ENCODE measurements at regions of chr12 and their contacts with region 1.

Region 1: GRCh38 chr12:51970904-51971646 is 19.6 kb downstream of the ACVR1B start:
- DNase-seq: peak; percentile 70
- ATAC-seq: peak; percentile 85
- H3K4me3 Mint-ChIP-seq: peak overlapping the region; percentile 53
- H3K27ac Mint-ChIP-seq: peak overlapping the region; percentile 82
- H3K4me1 Mint-ChIP-seq: peaks cover 64% of the 10 kb centered on the region
- H3K27me3 Mint-ChIP-seq: no peaks in the 10 kb centered on the region

Region 2: DNA sequence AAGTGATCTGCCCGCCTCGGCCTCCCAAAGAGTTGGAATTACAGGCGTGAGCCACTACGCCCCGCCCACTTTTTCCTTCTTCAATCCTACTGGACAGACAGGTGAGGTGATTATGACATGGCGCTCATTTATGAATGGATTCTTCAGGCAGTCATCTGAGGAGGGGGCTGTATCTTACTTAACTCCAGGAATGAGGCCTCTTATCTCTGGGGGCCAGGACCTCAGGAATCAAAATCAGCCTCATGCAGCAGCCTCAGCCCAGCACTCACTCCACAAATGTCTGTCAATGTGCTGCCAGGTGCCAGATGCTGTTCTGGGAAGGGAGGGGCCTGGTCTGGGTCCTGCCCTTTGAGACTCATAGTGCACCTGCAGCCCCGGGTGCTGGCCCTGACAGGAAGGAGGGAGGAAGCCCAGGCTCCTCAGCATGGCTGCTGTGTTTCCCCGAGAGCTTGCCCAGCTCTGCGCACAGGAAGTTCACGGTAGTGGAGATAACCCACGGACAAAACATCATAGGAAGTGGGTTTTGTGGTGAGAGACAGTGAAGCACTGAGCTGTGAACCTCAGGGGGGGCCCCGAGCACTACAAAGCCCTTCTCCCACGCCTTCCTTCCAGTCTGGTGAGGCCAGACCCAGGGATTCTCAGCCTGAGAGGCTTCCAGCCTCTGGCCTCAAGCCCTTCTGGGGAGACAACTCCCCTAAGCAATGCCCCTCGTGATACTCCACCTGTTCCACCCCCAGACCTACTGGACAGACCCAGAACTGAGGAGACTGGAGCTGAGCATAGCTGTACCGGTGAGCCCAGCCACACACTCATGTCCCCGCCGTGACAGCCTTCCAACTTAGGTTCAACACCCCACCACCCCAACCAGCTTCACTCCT is 602.2 kb before region 1 on chr12:
- CTCF ChIA-PET with region 1: interaction called, 3 read pairs
- POLR2A ChIA-PET with region 1: no interaction called
- intact Hi-C with region 1: loop called in 1 of 2 experiments (anchors 1 kb)
- DNase-seq: peak; percentile 94
- ATAC-seq: peak; percentile 97
- H3K4me3 Mint-ChIP-seq: peak overlapping the region; percentile 64
- H3K27ac Mint-ChIP-seq: peak overlapping the region; percentile 77
- H3K4me1 Mint-ChIP-seq: peaks cover 59% of the 10 kb centered on the region
- H3K27me3 Mint-ChIP-seq: no peaks in the 10 kb centered on the region

Region 3: GRCh38 chr12:51391283-51392162 is 579.6 kb before region 1 on chr12 and contains the start of gene GALNT6:
- CTCF ChIA-PET with region 1: no interaction called
- POLR2A ChIA-PET with region 1: no interaction called
- intact Hi-C with region 1: loop called in 1 of 2 experiments (anchors 10 kb)
- DNase-seq: peak; percentile 78
- ATAC-seq: peak; percentile 43
- H3K4me3 Mint-ChIP-seq: peak within 1 kb of the TSS; percentile 85
- H3K27ac Mint-ChIP-seq: peak within 1 kb of the TSS; percentile 67
- H3K4me1 Mint-ChIP-seq: peaks cover 79% of the 10 kb centered on the region
- H3K27me3 Mint-ChIP-seq: no peaks in the 10 kb centered on the region
- total RNA-seq, gene GALNT6: 11.7 to 12.0 TPM

Region 4: GRCh38 chr12:51886021-51886322 is 85.1 kb before region 1 on chr12:
- CTCF ChIA-PET with region 1: interaction called, 3 read pairs
- POLR2A ChIA-PET with region 1: no interaction called
- intact Hi-C with region 1: loop called in 1 of 2 experiments (anchors 2 kb)
- DNase-seq: peak; percentile 70
- ATAC-seq: peak; percentile 99
- H3K4me3 Mint-ChIP-seq: peak overlapping the region; percentile 12
- H3K27ac Mint-ChIP-seq: peak overlapping the region; percentile 87
- H3K4me1 Mint-ChIP-seq: peaks cover 19% of the 10 kb centered on the region
- H3K27me3 Mint-ChIP-seq: no peaks in the 10 kb centered on the region

Region 5: DNA sequence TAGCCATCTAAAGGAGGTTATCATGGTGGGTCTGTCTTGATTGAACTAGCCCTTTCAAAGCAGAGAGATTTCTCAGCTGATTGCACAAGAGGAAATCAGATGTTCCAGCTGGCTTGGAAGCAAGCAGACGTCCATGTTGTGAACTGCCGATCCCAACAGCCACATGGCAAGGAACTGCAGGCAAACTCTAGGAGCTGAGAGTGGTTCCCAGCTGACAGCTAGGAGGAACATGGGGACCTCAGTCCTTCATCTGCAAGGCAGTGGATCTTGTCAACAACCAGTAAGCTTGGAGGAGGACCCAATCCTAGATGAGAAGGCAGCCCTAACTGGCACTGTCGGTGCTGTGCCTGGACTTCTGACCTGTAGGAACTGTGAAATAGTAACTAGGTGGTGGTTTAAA is 11.9 kb before region 1 on chr12:
- CTCF ChIA-PET with region 1: interaction called, 32 read pairs
- POLR2A ChIA-PET with region 1: no interaction called
- intact Hi-C with region 1: loop called in 1 of 2 experiments (anchors 1 kb)
- DNase-seq: no peak
- ATAC-seq: no peak
- H3K4me3 Mint-ChIP-seq: no peak overlapping the region
- H3K27ac Mint-ChIP-seq: no peak overlapping the region
- H3K4me1 Mint-ChIP-seq: peaks cover 48% of the 10 kb centered on the region
- H3K27me3 Mint-ChIP-seq: no peaks in the 10 kb centered on the region

Region 6: DNA sequence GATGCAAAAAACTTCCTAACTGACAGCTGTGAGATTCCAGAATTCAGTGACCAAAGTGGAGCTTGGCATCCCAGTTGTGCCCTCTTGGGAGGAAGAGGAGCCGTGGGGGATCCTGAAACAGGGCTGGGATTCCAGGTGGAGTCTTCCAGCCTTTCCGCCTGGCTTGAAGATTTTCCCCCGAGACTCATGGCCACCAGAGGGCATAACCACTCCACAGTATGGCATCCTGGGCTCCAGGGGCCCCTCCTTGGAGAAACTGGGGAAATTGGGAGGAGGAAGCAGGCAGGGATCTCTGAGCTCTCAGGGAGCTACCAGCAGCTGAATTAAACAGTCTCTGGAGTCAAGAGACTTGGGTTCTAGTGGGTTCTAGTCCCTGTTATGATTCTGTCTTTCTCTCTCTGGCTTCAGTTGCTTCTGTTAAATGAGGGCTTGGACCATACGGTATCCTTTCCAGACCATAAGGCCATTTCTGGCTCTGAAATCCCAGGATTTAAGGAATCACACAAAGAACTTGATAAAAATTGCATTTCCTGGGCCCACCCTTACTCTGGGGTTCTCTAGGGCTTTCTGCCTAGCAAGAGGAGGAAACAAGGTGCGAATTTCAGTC is 33.1 kb after region 1 on chr12:
- CTCF ChIA-PET with region 1: interaction called, 13 read pairs
- POLR2A ChIA-PET with region 1: no interaction called
- intact Hi-C with region 1: loop called in 1 of 2 experiments (anchors 2 kb)
- DNase-seq: peak; percentile 43
- ATAC-seq: no peak
- H3K4me3 Mint-ChIP-seq: no peak overlapping the region
- H3K27ac Mint-ChIP-seq: no peak overlapping the region
- H3K4me1 Mint-ChIP-seq: peaks cover 13% of the 10 kb centered on the region
- H3K27me3 Mint-ChIP-seq: peaks cover 4% of the 10 kb centered on the region